HepG2 (cell line): ENCODE measurements at regions of chr3 and their contacts with region 1.

Region 1: DNA sequence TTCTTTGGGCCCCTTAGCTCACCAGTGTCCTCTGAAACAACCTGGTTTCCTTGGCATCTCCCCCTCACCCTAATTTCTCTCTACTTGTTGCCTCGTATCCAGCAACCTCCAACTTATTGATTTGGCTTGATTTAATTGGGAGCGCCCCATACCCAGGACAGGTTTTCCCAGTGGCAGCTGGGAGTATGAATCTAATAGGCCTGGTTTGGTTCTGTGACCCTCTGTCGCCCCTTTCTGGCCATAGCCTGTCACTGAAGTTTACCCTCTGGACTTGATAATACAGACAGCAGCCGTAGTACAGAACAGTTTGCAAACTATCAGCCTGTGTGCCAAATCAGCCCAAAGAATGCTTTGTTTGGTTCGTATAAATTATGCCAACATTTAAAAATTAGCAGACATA is 525.1 kb upstream of the GOLIM4 start:
- DNase-seq: peak; percentile 41
- ATAC-seq: peak; percentile 100
- H3K4me3 ChIP-seq: no peak overlapping the region
- H3K27ac ChIP-seq: no peak overlapping the region
- H3K4me1 ChIP-seq: no peaks in the 10 kb centered on the region
- H3K27me3 ChIP-seq: no peaks in the 10 kb centered on the region
- CTCF ChIP-seq: peak; percentile 80
- EP300 ChIP-seq: no peak
- POLR2A ChIP-seq: no peak
- RAD21 ChIP-seq: peak; percentile 67

Region 2: GRCh38 chr3:168249550-168250414 is 371.0 kb before region 1 on chr3:
- CTCF ChIA-PET with region 1: no interaction called
- POLR2A ChIA-PET with region 1: no interaction called
- in situ Hi-C with region 1: no loop called
- intact Hi-C with region 1: loop called (anchors 2 kb)
- DNase-seq: peak; percentile 54
- ATAC-seq: peak; percentile 99
- H3K4me3 ChIP-seq: peak overlapping the region; percentile 34 to 73 (median 43); a peak in 5 of 6 replicates
- H3K27ac ChIP-seq: no peak overlapping the region
- H3K4me1 ChIP-seq: peaks cover 18% of the 10 kb centered on the region
- H3K27me3 ChIP-seq: peaks cover 0 to 24% of the 10 kb centered on the region in 2 experiments; a peak in 3 of 5 replicates
- CTCF ChIP-seq: peak; percentile 79
- EP300 ChIP-seq: no peak
- POLR2A ChIP-seq: no peak
- RAD21 ChIP-seq: peak; percentile 69

Region 3: GRCh38 chr3:168847291-168847883 is 226.6 kb after region 1 on chr3:
- CTCF ChIA-PET with region 1: no interaction called
- POLR2A ChIA-PET with region 1: no interaction called
- in situ Hi-C with region 1: no loop called
- intact Hi-C with region 1: loop called (anchors 2 kb)
- DNase-seq: no peak
- ATAC-seq: peak; percentile 65
- H3K4me3 ChIP-seq: no peak overlapping the region; a peak in 1 of 6 replicates
- H3K27ac ChIP-seq: no peak overlapping the region
- H3K4me1 ChIP-seq: peaks cover 9% of the 10 kb centered on the region
- H3K27me3 ChIP-seq: peaks cover 0 to 4% of the 10 kb centered on the region in 2 experiments; a peak in 1 of 5 replicates
- CTCF ChIP-seq: peak; percentile 64
- EP300 ChIP-seq: no peak
- POLR2A ChIP-seq: no peak
- RAD21 ChIP-seq: 0 out of 2 replicates have a peak, but pooled peaks have one; percentile 32